Activated CD4-positive, alpha-beta memory T cell treated with anti-CD3 and anti-CD28 coated beads for 36 hours (primary cell): ENCODE measurements at regions of chr10 and their contacts with region 1.

Region 1: GRCh38 chr10:73908853-73909538 is 1.9 kb upstream of the PLAU start:
- DNase-seq: peak; percentile 87
- H3K4me3 Mint-ChIP-seq: peak overlapping the region; percentile 40
- H3K27ac Mint-ChIP-seq: peak overlapping the region; percentile 52
- H3K4me1 Mint-ChIP-seq: peaks cover 36% of the 10 kb centered on the region
- H3K27me3 Mint-ChIP-seq: peaks cover 38% of the 10 kb centered on the region

Region 2: GRCh38 chr10:73920089-73920488 is 11.1 kb after region 1 on chr10:
- CTCF ChIA-PET with region 1: interaction called, 3 read pairs
- POLR2A ChIA-PET with region 1: no interaction called
- intact Hi-C with region 1: loop called (anchors 1 kb)
- DNase-seq: no peak
- H3K4me3 Mint-ChIP-seq: no peak overlapping the region
- H3K27ac Mint-ChIP-seq: no peak overlapping the region
- H3K4me1 Mint-ChIP-seq: peaks cover 26% of the 10 kb centered on the region
- H3K27me3 Mint-ChIP-seq: peaks cover 18% of the 10 kb centered on the region

Region 3: DNA sequence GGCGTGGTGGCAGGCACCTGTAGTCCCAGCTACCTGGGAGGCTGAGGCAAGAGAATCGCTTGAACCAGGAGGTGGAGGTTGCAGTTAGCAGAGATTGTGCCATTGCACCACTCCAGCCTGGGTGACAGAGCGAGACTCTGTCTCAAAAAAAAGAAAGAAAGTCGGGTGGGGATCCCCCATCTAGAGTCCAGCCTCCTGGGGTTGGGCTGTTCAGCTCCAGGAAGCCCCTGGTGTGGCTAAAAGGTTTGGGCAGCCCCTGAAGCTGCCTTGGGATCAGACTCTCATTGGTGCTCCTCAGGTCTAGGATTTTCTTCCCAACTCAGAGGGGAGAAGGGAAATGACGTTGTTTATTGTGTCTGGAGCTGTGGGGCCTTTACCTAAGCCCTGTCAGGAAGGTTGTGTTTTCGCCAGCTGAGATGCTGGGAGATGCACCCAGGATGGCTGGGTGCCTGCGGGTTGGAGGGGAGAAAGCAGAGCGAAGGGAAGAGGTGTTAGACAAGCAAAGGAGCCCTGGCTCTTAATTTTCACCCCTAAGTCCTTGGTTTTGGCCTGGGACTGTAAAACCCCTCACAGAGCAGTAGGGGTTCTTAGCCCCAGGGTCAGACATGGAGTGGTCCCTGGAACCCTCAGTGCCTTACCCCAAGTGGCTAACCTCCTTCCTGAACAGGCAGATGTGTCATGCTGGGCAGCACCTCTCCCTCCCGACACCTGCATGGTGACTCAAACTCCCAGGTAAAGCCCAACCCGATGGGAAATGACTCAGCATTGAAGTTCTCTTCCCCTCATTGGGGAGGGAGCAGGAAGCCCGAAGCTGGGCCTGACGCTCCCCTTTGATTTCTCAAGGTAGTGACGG is 23.0 kb after region 1 on chr10:
- CTCF ChIA-PET with region 1: no interaction called
- POLR2A ChIA-PET with region 1: no interaction called
- intact Hi-C with region 1: loop called (anchors 1 kb)
- DNase-seq: peak; percentile 84
- H3K4me3 Mint-ChIP-seq: no peak overlapping the region
- H3K27ac Mint-ChIP-seq: peak overlapping the region; percentile 69
- H3K4me1 Mint-ChIP-seq: peaks cover 15% of the 10 kb centered on the region
- H3K27me3 Mint-ChIP-seq: no peaks in the 10 kb centered on the region

Region 4: GRCh38 chr10:74924251-74924951 is 1015.4 kb after region 1 on chr10:
- CTCF ChIA-PET with region 1: no interaction called
- POLR2A ChIA-PET with region 1: no interaction called
- intact Hi-C with region 1: no loop called
- DNase-seq: no peak
- H3K4me3 Mint-ChIP-seq: no peak overlapping the region
- H3K27ac Mint-ChIP-seq: no peak overlapping the region
- H3K4me1 Mint-ChIP-seq: peaks cover 41% of the 10 kb centered on the region
- H3K27me3 Mint-ChIP-seq: no peaks in the 10 kb centered on the region